ENCODE measurements at regions of chr11 and their contacts with region 1.

Region 1: GRCh38 chr11:11787305-11788062 is 54.3 kb upstream of the USP47 start:
- DNase-seq: peak; percentile 69 to 78
- H3K4me3 ChIP-seq: no peak overlapping the region
- H3K4me3 Mint-ChIP-seq: no peak overlapping the region
- H3K27ac Mint-ChIP-seq: no peak overlapping the region
- H3K4me1 ChIP-seq: no peaks in the 10 kb centered on the region
- H3K4me1 Mint-ChIP-seq: no peaks in the 10 kb centered on the region
- H3K27me3 ChIP-seq: no peaks in the 10 kb centered on the region
- H3K27me3 Mint-ChIP-seq: peaks cover 9% of the 10 kb centered on the region
- CTCF ChIP-seq: peak; percentile 76 to 85

Region 2: DNA sequence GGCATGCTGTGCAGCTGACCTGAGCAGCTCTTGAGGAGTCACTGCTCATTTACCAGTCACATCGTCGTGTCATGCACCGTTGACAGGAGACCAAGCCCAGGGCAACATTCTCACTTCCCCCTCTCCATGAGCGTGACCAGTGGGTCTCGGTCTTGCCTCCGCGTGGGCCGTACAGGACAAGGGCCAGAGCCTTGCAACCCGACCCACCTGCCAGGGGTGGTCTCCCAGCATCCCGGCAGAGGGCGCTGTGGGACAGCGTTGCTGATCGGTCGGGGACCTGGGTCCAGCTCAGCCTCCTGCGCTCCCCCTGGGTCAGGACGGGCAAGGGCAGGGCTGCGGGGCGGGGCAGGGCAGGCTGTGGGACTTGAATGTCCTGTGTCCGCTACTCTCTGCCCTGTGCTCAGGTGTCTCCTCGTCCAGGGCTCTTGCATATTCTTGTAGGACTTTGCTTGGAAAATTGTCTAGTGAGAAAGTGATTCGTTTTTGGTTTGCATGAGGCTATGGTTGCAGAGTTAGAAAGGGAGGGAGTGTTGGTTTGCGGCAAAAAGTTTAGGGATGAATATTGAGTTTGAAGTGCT is 995.0 kb before region 1 on chr11:
- CTCF ChIA-PET with region 1: no interaction called
- POLR2A ChIA-PET with region 1: no interaction called
- intact Hi-C with region 1: loop called (anchors 2 kb)
- DNase-seq: peak; percentile 93 to 96
- H3K4me3 ChIP-seq: no peak overlapping the region
- H3K4me3 Mint-ChIP-seq: peak overlapping the region; percentile 10
- H3K27ac Mint-ChIP-seq: no peak overlapping the region
- H3K4me1 ChIP-seq: no peaks in the 10 kb centered on the region
- H3K4me1 Mint-ChIP-seq: peaks cover 6% of the 10 kb centered on the region
- H3K27me3 ChIP-seq: no peaks in the 10 kb centered on the region
- H3K27me3 Mint-ChIP-seq: no peaks in the 10 kb centered on the region
- CTCF ChIP-seq: peak; percentile 94 to 99

Region 3: DNA sequence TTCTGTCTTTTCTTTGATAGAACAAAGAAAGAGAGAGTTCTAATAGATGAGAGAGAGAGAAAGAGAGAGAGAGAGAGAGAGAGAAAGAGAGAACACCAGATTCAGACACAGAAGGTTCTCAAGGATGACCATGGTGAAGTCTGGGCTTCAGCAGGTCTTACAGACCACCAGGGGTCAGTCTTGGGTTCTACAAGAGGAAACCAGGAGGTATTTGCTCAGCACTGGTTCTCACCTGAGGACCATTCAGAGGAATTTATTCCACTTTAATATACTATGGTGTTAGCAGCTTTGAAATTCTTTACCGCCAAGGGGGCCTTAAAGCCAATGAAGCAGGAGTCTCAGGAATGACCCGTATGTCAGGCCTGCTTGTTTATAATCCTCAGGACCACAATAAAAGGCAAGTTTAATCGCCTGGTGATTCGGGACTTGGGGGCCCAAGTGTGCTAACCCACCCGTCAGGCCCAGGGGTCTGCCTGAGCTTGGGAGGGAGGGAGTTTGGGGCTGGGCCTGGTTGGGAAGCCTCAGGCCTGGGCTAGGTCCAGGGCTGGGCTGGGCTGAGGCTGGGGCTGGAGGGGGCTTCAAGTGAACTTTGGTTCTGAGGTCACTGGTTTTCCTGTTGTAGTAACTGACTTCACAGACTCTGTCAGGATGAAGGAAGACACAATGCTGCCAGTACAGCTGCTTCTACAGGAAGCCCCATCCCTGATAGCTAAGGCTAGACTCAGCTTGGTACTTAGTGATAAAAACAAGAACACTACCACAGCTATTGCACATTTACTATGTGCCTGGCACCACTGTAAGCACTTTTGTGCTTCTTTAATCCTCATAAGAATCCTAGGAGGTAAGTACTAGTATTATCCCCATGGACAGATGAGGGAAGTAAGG is 750.4 kb before region 1 on chr11:
- CTCF ChIA-PET with region 1: interaction called, 8 read pairs
- POLR2A ChIA-PET with region 1: no interaction called
- intact Hi-C with region 1: loop called (anchors 2 kb)
- DNase-seq: peak in 1 of 2 experiments; percentile 61
- H3K4me3 ChIP-seq: no peak overlapping the region
- H3K4me3 Mint-ChIP-seq: no peak overlapping the region
- H3K27ac Mint-ChIP-seq: no peak overlapping the region
- H3K4me1 ChIP-seq: no peaks in the 10 kb centered on the region
- H3K4me1 Mint-ChIP-seq: peaks cover 16% of the 10 kb centered on the region
- H3K27me3 ChIP-seq: no peaks in the 10 kb centered on the region
- H3K27me3 Mint-ChIP-seq: peaks cover 10% of the 10 kb centered on the region
- CTCF ChIP-seq: peak; percentile 68 to 93

Region 4: DNA sequence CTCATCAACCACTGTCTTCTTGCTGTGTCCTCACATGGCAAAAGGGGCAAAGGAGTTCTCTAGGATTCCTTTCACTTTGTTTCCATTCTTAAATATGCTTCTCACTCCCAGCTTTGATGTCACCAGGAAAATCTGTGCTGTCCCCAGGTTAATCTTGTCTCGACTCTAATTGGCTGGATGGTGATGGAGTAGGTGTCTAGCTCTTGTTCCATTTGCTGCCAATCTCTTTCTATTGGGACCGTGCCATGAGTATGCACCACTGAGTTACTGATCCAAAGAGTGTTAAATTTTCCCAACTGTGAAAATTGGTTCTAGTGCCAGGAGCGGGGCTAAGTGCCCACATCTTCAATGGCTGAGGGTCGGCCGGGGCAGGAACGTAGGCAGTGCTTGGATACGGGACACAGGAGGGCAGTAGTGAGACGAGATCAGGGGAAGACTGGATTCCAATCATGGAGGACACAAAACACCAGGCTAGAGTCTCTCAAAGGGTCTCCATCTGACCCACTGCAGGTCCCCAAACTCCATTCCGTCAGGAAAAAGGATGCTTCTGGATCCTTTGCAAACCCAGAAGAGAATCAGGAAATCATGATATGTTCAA is 386.8 kb before region 1 on chr11:
- CTCF ChIA-PET with region 1: interaction called, 4 read pairs
- POLR2A ChIA-PET with region 1: no interaction called
- intact Hi-C with region 1: loop called (anchors 1 kb)
- DNase-seq: peak in 1 of 2 experiments; percentile 30
- H3K4me3 ChIP-seq: no peak overlapping the region
- H3K4me3 Mint-ChIP-seq: no peak overlapping the region
- H3K27ac Mint-ChIP-seq: no peak overlapping the region
- H3K4me1 ChIP-seq: no peaks in the 10 kb centered on the region
- H3K4me1 Mint-ChIP-seq: no peaks in the 10 kb centered on the region
- H3K27me3 ChIP-seq: no peaks in the 10 kb centered on the region
- H3K27me3 Mint-ChIP-seq: peaks cover 24% of the 10 kb centered on the region
- CTCF ChIP-seq: peak; percentile 17 to 61

Region 5: GRCh38 chr11:11691296-11692142 is 96.0 kb before region 1 on chr11:
- CTCF ChIA-PET with region 1: no interaction called
- POLR2A ChIA-PET with region 1: no interaction called
- intact Hi-C with region 1: no loop called
- DNase-seq: peak in 1 of 2 experiments; percentile 24
- H3K4me3 ChIP-seq: no peak overlapping the region
- H3K4me3 Mint-ChIP-seq: no peak overlapping the region
- H3K27ac Mint-ChIP-seq: no peak overlapping the region
- H3K4me1 ChIP-seq: no peaks in the 10 kb centered on the region; the same call in 1 of the 2 replicates
- H3K4me1 Mint-ChIP-seq: no peaks in the 10 kb centered on the region
- H3K27me3 ChIP-seq: no peaks in the 10 kb centered on the region
- H3K27me3 Mint-ChIP-seq: peaks cover 9% of the 10 kb centered on the region
- CTCF ChIP-seq: no peak

Region 6: GRCh38 chr11:11748706-11749365 is 38.6 kb before region 1 on chr11:
- CTCF ChIA-PET with region 1: no interaction called
- POLR2A ChIA-PET with region 1: no interaction called
- intact Hi-C with region 1: no loop called
- DNase-seq: no peak
- H3K4me3 ChIP-seq: no peak overlapping the region
- H3K4me3 Mint-ChIP-seq: no peak overlapping the region
- H3K27ac Mint-ChIP-seq: no peak overlapping the region
- H3K4me1 ChIP-seq: no peaks in the 10 kb centered on the region
- H3K4me1 Mint-ChIP-seq: no peaks in the 10 kb centered on the region
- H3K27me3 ChIP-seq: no peaks in the 10 kb centered on the region
- H3K27me3 Mint-ChIP-seq: peaks cover 33% of the 10 kb centered on the region
- CTCF ChIP-seq: no peak

Region 7: GRCh38 chr11:11826260-11826659 is 38.8 kb after region 1 on chr11:
- CTCF ChIA-PET with region 1: no interaction called
- POLR2A ChIA-PET with region 1: no interaction called
- intact Hi-C with region 1: no loop called
- DNase-seq: no peak
- H3K4me3 ChIP-seq: no peak overlapping the region
- H3K4me3 Mint-ChIP-seq: no peak overlapping the region
- H3K27ac Mint-ChIP-seq: no peak overlapping the region
- H3K4me1 ChIP-seq: no peaks in the 10 kb centered on the region
- H3K4me1 Mint-ChIP-seq: no peaks in the 10 kb centered on the region
- H3K27me3 ChIP-seq: no peaks in the 10 kb centered on the region; the same call in 1 of the 2 replicates
- H3K27me3 Mint-ChIP-seq: no peaks in the 10 kb centered on the region
- CTCF ChIP-seq: no peak

Region 8: DNA sequence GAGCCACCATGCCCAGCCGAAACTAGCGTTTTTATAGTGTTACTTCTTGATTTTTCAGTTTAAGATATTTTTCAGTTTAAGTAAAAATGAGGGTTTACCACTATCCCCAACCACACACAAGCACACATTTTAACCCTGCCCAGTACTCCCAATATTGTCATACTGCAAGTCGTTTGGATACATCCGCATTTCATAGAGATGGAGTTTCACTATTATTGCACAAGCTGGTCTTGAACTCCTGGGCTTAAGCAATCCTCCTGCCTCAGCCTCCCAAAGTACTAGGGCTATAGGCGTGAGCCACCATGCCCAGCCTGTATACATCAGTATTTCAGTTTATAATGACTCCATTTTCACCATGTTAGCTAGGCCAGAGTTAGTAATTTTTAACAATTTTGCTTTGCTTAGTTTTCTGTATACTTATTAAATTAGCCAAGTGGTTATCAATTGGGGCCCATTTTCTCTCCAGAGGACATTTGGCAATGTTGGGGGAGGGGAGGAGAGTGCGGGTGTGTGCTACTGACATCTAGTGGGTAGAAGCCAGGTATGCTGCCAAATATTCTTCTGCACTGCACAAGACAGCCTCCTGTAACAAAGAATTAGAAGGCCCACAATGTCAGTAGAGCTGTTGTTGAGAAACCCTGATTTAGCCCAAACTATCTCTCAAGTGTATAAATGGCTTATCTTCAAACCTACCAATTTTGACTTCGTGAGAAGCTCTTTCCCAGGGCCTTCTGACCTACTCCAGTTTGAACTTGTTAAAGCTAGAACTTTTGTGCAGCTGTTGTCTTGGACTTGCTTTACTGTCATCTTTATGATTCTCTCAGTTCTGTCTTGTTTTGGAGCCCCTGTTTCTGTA is 61.6 kb after region 1 on chr11:
- CTCF ChIA-PET with region 1: no interaction called
- POLR2A ChIA-PET with region 1: no interaction called
- intact Hi-C with region 1: loop called (anchors 2 kb)
- DNase-seq: peak; percentile 70 to 81
- H3K4me3 ChIP-seq: no peak overlapping the region
- H3K4me3 Mint-ChIP-seq: no peak overlapping the region
- H3K27ac Mint-ChIP-seq: no peak overlapping the region
- H3K4me1 ChIP-seq: peaks cover 37% of the 10 kb centered on the region
- H3K4me1 Mint-ChIP-seq: peaks cover 36% of the 10 kb centered on the region
- H3K27me3 ChIP-seq: no peaks in the 10 kb centered on the region
- H3K27me3 Mint-ChIP-seq: no peaks in the 10 kb centered on the region
- CTCF ChIP-seq: peak; percentile 78 to 93

Region 9: DNA sequence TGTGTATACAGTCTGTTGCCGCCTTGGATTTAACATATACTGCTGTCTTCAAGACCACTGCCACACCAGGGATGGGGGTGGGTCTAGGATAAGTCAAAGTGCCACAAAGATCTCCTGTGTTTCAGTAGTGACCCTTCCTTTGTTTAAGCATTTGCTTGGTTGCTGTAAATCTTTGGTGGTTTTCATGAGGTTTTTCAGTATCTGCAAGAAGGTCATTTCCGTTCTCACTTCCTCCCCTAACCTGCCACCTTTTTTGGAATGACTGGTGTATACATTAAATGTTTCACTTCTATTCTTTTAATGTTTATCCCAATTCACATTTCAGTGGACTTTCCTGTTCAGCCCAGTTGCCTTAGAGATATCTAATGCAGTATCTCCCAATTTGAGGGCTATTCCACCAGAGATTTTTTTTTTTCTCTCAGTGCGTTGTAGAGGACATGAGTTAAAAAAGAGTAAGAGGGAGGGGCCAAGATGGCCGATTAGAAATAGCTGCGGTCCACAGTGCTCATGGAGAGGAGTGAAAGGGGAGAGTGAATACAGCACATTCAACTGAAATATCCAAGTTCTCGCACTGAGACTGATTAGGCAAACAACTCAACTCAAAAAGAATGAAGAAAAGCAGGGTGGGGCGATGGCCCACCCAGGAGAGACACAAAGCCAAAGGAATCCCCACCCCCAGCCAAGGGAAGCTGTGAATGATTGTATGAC is 97.4 kb after region 1 on chr11:
- CTCF ChIA-PET with region 1: no interaction called
- POLR2A ChIA-PET with region 1: no interaction called
- intact Hi-C with region 1: no loop called
- DNase-seq: no peak
- H3K4me3 ChIP-seq: no peak overlapping the region
- H3K4me3 Mint-ChIP-seq: no peak overlapping the region
- H3K27ac Mint-ChIP-seq: no peak overlapping the region
- H3K4me1 ChIP-seq: peaks cover 9% of the 10 kb centered on the region
- H3K4me1 Mint-ChIP-seq: peaks cover 29% of the 10 kb centered on the region
- H3K27me3 ChIP-seq: no peaks in the 10 kb centered on the region
- H3K27me3 Mint-ChIP-seq: no peaks in the 10 kb centered on the region
- CTCF ChIP-seq: no peak